ENCODE measurements at regions of chr7 and their contacts with region 1.

Region 1: GRCh38 chr7:92528188-92528957 is at the starts of genes PEX1 and RBM48:
- DNase-seq: peak; percentile 100
- H3K4me3 ChIP-seq: peak within 1 kb of the TSS; percentile 88 to 100 (median 95)
- H3K27ac ChIP-seq: peak within 1 kb of the TSS; percentile 91
- H3K4me1 ChIP-seq: peaks cover 15% of the 10 kb centered on the region
- H3K27me3 ChIP-seq: no peaks in the 10 kb centered on the region
- CTCF ChIP-seq: peak; percentile 34 to 50
- POLR2A ChIP-seq: peak; percentile 70
- total RNA-seq, gene PEX1: 10.7 and 11.7 TPM in 2 replicates
- total RNA-seq, gene RBM48: 12.0 and 13.1 TPM in 2 replicates

Region 2: GRCh38 chr7:92245487-92246362 is 282.6 kb before region 1 on chr7 and contains the starts of genes ANKIB1 and KRIT1:
- CTCF ChIA-PET with region 1: no interaction called
- POLR2A ChIA-PET with region 1: no interaction called
- dilution Hi-C with region 1: no loop called
- intact Hi-C with region 1: loop called (anchors 5 kb)
- DNase-seq: peak; percentile 91
- H3K4me3 ChIP-seq: peak within 1 kb of the TSS; percentile 99
- H3K27ac ChIP-seq: peak within 1 kb of the TSS; percentile 63
- H3K4me1 ChIP-seq: peaks cover 22% of the 10 kb centered on the region
- H3K27me3 ChIP-seq: no peaks in the 10 kb centered on the region
- CTCF ChIP-seq: peak in 1 of 2 donors; percentile 26
- POLR2A ChIP-seq: no peak
- total RNA-seq, gene ANKIB1: 48.4 and 56.5 TPM in 2 replicates
- total RNA-seq, gene KRIT1: 32.9 and 43.7 TPM in 2 replicates

Region 3: DNA sequence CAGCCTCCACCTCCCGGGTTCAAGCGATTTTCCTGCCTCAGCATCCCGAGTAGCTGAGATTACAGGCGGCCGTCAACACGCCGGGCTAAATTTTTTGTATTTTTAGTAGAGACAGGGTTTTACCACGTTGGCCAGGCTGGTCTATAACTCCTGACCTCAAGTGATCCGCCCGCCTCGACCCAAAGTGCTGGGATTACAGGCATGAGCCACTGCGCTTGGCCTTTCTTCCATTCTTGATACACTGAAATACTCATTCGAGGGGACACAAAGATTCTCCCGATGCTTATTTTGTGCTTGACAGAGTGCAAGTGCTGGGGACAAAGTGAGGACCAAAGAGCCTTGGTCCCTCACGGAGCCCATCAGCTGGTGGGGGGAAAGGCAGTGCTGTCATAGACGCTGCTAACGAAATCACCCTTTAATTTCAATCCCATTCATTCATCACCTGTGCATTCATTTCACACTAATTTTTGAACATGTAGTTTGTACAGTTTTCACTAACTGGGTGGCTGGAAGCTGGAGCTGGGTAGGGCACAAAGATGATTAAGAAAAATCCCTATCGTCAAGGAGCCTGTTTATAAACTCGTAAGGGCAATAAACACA is 62.4 kb after region 1 on chr7:
- CTCF ChIA-PET with region 1: interaction called, 3 read pairs
- POLR2A ChIA-PET with region 1: interaction called, 4 read pairs
- dilution Hi-C with region 1: no loop called
- intact Hi-C with region 1: loop called (anchors 1 kb)
- DNase-seq: no peak
- H3K4me3 ChIP-seq: peak overlapping the region in 2 of 3 experiments; percentile 33 to 95
- H3K27ac ChIP-seq: no peak overlapping the region
- H3K4me1 ChIP-seq: peaks cover 12% of the 10 kb centered on the region
- H3K27me3 ChIP-seq: no peaks in the 10 kb centered on the region
- CTCF ChIP-seq: no peak
- POLR2A ChIP-seq: no peak

Region 4: GRCh38 chr7:92609921-92610518 is 81.6 kb after region 1 on chr7:
- CTCF ChIA-PET with region 1: interaction called, 13 read pairs
- POLR2A ChIA-PET with region 1: interaction called, 7 read pairs
- dilution Hi-C with region 1: no loop called
- intact Hi-C with region 1: no loop called
- DNase-seq: peak; percentile 47
- H3K4me3 ChIP-seq: no peak overlapping the region
- H3K27ac ChIP-seq: no peak overlapping the region
- H3K4me1 ChIP-seq: no peaks in the 10 kb centered on the region
- H3K27me3 ChIP-seq: no peaks in the 10 kb centered on the region
- CTCF ChIP-seq: peak in 1 of 2 donors; percentile 14
- POLR2A ChIP-seq: no peak

Region 5: GRCh38 chr7:93115796-93116195 is 587.4 kb after region 1 on chr7:
- CTCF ChIA-PET with region 1: no interaction called
- POLR2A ChIA-PET with region 1: no interaction called
- dilution Hi-C with region 1: no loop called
- intact Hi-C with region 1: no loop called
- DNase-seq: no peak
- H3K4me3 ChIP-seq: no peak overlapping the region
- H3K27ac ChIP-seq: no peak overlapping the region
- H3K4me1 ChIP-seq: peaks cover 10% of the 10 kb centered on the region
- H3K27me3 ChIP-seq: no peaks in the 10 kb centered on the region
- CTCF ChIP-seq: no peak
- POLR2A ChIP-seq: no peak

Measured in endothelial cell of umbilical vein (primary cell).